Dorsolateral prefrontal cortex (tissue), 120 donors: ENCODE measurements at regions of chr2 and their contacts with region 1.

Region 1: DNA sequence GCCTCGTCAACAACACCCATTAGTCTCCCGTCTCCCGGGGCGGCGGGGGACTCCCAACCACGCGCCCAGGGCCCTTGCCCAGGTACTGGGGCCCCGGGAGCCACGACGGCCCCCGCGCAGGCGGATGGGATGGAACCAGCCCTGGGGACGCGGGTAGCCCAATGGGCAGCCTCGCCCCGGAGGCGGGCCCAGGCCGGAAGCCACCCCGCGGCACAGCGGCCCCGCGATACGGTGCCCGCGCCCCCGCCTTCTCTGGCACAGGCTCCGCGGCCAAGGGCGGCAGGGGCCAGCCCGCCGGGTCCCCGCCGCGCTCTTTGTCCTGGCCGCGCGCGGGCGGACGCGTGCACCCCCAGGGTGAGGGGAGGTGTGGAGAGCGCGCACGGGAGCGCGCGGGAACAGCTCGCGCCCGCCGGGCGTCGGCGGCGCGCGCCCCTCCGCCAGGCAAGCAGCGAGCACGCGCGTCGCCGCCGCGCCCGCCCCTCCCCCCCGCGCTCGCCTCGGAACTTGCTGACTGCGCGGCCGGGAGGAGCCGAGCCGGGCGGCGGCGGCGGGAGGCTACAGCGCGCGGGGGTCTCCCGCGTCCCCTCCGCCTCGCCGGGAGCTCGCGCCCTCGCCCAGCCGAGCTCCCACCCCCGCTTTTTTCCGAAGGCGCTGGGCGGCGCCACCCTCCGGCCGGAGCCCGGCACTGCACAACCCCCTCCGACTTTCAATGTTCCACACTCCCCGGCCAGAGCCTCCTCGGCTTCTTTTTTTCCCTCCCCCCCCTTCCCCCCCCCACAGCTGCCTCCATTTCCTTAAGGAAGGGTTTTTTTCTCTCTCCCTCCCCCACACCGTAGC is at the start of gene UBE2E3:
- DNase-seq: peak; percentile 64 to 89 (median 74)
- H3K4me3 ChIP-seq: peak within 1 kb of the TSS; percentile 66 to 95 (median 78)
- H3K27ac ChIP-seq: peak within 1 kb of the TSS; percentile 84 to 99 (median 96)
- H3K27me3 ChIP-seq: no peaks in the 10 kb centered on the region
- CTCF ChIP-seq: peak in 55 of 56 donors; percentile 10 to 72 (median 51)
- total RNA-seq, gene UBE2E3: 57.4 to 131 (median 85.6) TPM

Region 2: DNA sequence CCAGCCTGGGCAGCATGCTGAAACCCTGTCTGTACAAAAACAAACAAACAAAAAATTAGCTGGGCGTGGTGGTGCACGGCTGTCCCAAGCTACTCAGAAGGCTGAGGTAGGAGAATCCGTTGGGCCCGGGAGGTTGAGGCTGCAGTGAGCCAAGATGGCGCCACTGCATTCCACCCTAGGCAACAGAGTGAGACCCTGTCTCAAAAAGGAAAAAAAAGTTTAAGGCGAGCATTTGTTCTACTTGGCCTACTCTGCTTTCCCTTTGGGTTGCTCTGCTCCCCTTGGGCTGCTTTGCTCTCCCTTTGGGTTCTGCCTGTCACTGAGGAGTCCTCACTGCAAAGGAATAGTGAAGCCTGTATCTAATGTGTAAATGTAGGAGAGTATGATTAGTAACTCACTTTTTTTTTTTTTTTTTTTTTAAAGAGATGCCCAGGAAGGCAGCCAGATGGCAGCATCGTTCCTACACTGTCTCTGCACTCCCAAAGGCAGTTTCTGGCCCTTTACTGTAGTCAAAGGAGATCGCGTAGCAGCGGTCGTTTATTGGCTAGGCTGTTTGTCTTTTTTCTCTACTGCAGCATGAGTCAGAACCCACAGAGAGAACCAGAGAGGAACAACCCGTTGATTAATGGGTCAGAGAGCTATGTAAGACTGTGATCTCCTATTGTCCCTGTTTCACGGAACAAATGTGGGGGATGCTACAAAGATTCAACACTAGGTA is 854.9 kb before region 1 on chr2:
- intact Hi-C with region 1: loop called (anchors 5 to 10 kb)
- DNase-seq: peak; percentile 21 to 80 (median 58)
- H3K4me3 ChIP-seq: peak overlapping the region in 36 of 59 donors; percentile 1 to 47 (median 28)
- H3K27ac ChIP-seq: peak overlapping the region in 9 of 59 donors; percentile 16 to 63 (median 38)
- H3K27me3 ChIP-seq: peaks cover 0 to 6% (median 0%) of the 10 kb centered on the region in 45 donors
- CTCF ChIP-seq: peak; percentile 48 to 86 (median 72)

Region 3: DNA sequence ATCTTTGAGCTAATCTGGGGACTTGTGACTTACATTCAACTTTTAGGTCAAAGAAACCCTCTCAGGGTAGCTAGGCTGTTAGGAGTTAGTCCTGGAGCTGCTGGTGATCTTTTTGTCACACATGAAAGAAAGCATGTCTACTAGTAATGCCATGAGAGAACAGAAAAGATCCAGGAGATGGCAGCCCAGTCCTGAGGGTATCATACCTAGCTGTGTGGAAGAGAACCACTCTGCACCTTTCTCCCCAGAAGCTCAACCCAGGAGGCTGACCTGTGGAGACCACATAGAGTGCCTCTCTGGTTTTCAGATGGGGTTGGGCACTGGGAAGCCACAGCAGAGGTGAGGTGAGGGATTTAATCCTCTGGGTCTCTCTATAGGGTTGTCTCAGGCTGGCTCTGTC is 460.1 kb before region 1 on chr2:
- intact Hi-C with region 1: loop called in 1 of 2 experiments (anchors 10 kb)
- DNase-seq: peak in 1 of 10 donors; percentile 36
- H3K4me3 ChIP-seq: no peak overlapping the region
- H3K27ac ChIP-seq: no peak overlapping the region
- H3K27me3 ChIP-seq: no peaks in the 10 kb centered on the region
- CTCF ChIP-seq: peak in 20 of 56 donors; percentile 6 to 47 (median 25)

Region 4: GRCh38 chr2:180662941-180663473 is 317.3 kb before region 1 on chr2:
- intact Hi-C with region 1: loop called in 1 of 2 experiments (anchors 10 kb)
- DNase-seq: no peak
- H3K4me3 ChIP-seq: no peak overlapping the region
- H3K27ac ChIP-seq: peak overlapping the region in 3 of 59 donors; percentile 27 to 61 (median 27)
- H3K27me3 ChIP-seq: no peaks in the 10 kb centered on the region
- CTCF ChIP-seq: no peak

Region 5: GRCh38 chr2:180907731-180908130 is 72.6 kb before region 1 on chr2:
- intact Hi-C with region 1: no loop called
- DNase-seq: no peak
- H3K4me3 ChIP-seq: no peak overlapping the region
- H3K27ac ChIP-seq: no peak overlapping the region
- H3K27me3 ChIP-seq: no peaks in the 10 kb centered on the region
- CTCF ChIP-seq: no peak

Region 6: DNA sequence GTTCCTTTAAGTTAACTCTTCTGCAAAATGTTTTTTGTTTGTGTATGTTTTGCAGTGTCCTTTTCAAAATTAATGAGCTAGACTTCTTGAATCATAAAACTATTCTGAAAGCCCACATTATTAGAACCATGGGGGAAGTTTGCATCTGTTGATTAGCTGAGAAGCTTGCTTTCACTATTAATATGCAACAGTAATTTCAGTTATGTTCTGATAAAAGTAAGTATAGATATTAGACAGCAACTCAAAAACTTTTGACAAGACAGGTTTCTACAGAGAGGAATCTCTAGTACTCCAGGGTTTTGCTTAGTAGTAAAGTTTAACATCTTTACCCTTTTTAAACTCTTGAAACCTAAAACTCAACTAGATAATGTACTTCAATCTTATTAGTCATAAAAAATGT is 147.9 kb after region 1 on chr2:
- intact Hi-C with region 1: no loop called
- DNase-seq: no peak
- H3K4me3 ChIP-seq: no peak overlapping the region
- H3K27ac ChIP-seq: no peak overlapping the region
- H3K27me3 ChIP-seq: no peaks in the 10 kb centered on the region
- CTCF ChIP-seq: no peak